Left cardiac atrium (tissue), 4 donors: ENCODE measurements at regions of chr15 and their contacts with region 1.

Region 1: DNA sequence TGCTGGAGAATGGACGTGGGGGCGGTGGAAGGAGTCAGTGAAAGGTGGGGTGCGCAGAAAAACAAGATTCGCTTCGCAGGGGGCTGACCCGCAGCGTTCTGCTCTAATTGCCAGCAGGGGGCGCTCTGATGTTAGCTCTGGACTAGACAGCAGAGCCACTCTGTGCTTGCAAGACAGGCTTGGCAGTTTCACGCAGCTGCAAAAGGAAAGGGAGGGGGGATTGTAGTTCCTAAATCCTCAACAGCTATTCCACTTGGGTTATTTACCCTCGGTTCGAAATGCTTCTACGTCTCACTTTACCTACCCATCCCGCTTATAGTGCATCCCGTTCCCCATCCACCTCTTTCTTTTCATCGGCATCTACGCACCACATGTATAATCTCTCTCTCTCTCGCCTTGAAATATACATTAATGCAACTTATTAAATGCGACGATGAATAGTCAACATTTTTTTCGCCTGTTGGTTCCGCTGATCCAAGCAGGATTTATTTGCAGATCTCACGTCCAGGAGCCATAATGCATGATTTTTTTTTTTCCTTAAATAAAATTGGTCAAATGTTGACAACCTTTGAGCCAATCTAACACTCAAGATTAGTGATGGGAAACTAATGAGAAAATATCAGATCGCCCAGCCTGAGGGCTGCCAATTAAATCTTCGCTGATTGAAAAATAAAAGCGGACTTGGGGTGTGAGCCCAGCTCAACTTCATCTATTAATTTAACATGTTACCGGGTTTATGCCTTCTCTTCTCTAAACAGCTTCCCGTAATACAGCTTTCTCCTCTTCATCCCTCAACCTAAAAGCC is 216.4 kb downstream of the MEIS2 start:
- DNase-seq: peak; percentile 90
- ATAC-seq: peak; percentile 87 to 91

Region 2: GRCh38 chr15:37100109-37100965 is 216.4 kb after region 1 on chr15 and contains the start of gene MEIS2:
- intact Hi-C with region 1: loop called (anchors 5 to 10 kb)
- DNase-seq: peak; percentile 94
- ATAC-seq: peak; percentile 68 to 74
- total RNA-seq, gene MEIS2: 21.1 to 21.5 TPM

Region 3: DNA sequence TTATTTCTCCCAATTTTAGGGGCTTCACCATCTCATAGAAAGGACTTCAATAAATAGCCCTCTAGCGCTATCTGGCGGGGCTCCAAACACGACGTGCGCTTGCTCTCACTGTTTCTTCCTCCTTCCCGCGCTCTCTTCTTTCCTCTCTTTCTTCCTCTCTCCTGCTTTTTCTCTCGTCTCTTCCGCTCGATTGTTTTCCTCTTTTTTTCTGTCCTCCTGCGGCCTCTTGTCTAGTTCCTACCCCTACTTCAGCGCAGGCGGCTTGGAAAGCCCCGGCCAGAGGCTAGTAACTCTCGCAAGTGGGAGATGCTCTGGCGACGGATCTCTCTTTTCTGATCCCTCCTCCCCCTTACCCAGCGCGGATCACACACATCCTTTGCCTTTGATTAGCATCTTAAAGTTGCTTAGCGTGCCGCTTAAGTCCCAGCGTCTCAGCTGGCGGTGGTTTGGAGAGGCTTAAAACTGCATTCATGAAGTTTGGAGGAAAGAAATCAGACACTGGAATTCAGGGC is 222.6 kb after region 1 on chr15:
- intact Hi-C with region 1: loop called (anchors 5 to 10 kb)
- DNase-seq: peak; percentile 60
- ATAC-seq: no peak

Region 4: GRCh38 chr15:37134699-37135131 is 250.8 kb after region 1 on chr15:
- intact Hi-C with region 1: loop called (anchors 2 to 10 kb)
- DNase-seq: no peak
- ATAC-seq: peak in 1 of 2 donors; percentile 76